ENCODE measurements at regions of chr7 and their contacts with region 1.

Region 1: GRCh38 chr7:44847508-44847920 is 373 bp downstream of the H2AZ2 start:
- DNase-seq: peak; percentile 91
- H3K4me3 Mint-ChIP-seq: peak overlapping the region; percentile 93
- H3K27ac Mint-ChIP-seq: peak overlapping the region; percentile 95
- H3K4me1 Mint-ChIP-seq: peaks cover 37% of the 10 kb centered on the region
- H3K27me3 Mint-ChIP-seq: peaks cover 2% of the 10 kb centered on the region

Region 2: DNA sequence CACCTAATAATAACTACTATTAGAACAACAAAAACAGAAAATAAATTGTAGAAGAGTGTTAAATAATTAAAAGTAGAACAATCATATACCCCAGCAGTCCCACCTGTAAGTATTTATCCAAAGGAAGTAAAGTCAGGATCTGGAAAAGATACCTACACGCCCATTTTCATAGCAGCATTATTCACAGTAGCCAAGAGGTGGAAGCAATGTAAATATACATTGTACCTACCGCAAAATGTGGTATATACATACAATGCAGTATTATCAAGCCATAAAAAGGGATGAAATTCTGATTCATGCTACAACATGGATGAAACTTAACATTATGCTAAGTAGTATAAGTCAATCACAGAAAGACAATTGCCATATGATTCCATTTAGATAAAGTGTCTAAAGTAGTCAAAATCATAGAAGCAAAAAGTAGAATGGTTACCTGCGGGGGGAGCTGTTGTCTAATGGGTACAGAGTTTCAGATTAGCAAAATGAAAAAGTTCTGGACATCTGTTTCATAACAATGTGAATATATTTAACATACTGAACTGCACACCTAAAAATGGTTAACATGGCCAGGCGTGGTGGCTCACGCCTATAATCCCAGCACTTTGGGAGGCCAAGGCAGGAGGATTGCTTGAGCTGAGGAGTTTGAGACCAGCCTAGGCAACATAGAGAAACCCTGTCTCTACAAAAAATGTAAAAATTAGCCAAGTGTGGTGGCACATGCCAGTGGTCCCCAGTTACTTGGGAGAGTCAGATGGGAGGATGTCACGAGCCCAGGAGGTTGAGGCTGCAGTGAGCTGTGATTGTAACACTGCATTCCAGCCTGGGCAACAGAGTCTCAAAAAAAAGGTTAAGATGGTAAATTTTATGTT is 259.4 kb before region 1 on chr7:
- CTCF ChIA-PET with region 1: interaction called, 6 read pairs
- POLR2A ChIA-PET with region 1: interaction called, 27 read pairs
- intact Hi-C with region 1: loop called (anchors 1 kb)
- DNase-seq: peak; percentile 73
- H3K4me3 Mint-ChIP-seq: no peak overlapping the region
- H3K27ac Mint-ChIP-seq: peak overlapping the region; percentile 33
- H3K4me1 Mint-ChIP-seq: peaks cover 8% of the 10 kb centered on the region
- H3K27me3 Mint-ChIP-seq: no peaks in the 10 kb centered on the region

Region 3: GRCh38 chr7:44633254-44634186 is 214.0 kb before region 1 on chr7:
- CTCF ChIA-PET with region 1: interaction called, 4 read pairs
- POLR2A ChIA-PET with region 1: interaction called, 14 read pairs
- intact Hi-C with region 1: loop called (anchors 1 kb)
- DNase-seq: peak; percentile 84
- H3K4me3 Mint-ChIP-seq: peak overlapping the region; percentile 53
- H3K27ac Mint-ChIP-seq: peak overlapping the region; percentile 96
- H3K4me1 Mint-ChIP-seq: peaks cover 97% of the 10 kb centered on the region
- H3K27me3 Mint-ChIP-seq: no peaks in the 10 kb centered on the region

Region 4: DNA sequence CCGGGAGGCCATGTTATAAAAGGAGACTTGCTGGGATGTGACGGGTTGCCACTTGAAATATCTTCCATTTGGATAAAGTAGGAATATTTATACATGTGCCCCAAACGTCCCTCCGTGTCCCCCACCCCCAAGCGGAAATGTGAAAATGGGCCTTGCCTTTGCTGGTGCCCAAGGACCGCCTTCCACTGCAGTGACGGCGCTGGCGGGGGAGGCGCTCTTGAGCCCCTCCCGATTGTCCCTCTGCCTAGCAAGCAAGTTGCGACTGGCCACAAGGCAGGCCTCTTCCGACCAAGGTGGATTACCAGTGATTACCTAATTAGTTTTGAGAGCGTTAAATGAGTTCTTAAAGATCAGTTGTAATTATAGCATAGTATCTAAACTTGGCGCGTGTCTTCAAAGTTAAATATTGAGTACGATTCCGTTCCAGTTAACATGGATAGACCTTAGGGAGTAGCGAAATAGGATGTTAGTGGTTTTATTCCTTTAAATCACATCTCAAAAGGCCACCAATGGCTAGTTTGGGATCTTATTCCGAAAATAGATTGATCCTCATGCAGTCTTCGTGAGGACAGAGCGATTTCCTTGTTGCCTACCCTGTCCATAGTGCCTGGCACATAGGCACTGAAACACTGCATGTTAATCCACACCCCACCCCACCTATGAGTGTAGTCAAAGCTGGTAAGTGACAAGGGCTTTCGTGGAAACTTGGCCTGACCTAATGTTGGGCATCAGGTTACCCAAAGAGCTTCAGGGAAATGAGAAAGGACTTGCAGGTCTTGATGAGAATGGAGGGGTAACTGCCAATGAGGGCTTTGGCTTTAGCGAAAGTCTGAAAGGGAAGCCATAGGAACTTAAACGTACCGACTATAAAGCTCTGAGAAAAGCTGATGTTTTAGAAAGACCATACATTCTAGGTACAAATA is 49.9 kb before region 1 on chr7:
- CTCF ChIA-PET with region 1: interaction called, 10 read pairs
- POLR2A ChIA-PET with region 1: interaction called, 17 read pairs
- intact Hi-C with region 1: loop called (anchors 1 kb)
- DNase-seq: peak; percentile 91
- H3K4me3 Mint-ChIP-seq: peak overlapping the region; percentile 97
- H3K27ac Mint-ChIP-seq: peak overlapping the region; percentile 99
- H3K4me1 Mint-ChIP-seq: peaks cover 31% of the 10 kb centered on the region
- H3K27me3 Mint-ChIP-seq: no peaks in the 10 kb centered on the region

Region 5: DNA sequence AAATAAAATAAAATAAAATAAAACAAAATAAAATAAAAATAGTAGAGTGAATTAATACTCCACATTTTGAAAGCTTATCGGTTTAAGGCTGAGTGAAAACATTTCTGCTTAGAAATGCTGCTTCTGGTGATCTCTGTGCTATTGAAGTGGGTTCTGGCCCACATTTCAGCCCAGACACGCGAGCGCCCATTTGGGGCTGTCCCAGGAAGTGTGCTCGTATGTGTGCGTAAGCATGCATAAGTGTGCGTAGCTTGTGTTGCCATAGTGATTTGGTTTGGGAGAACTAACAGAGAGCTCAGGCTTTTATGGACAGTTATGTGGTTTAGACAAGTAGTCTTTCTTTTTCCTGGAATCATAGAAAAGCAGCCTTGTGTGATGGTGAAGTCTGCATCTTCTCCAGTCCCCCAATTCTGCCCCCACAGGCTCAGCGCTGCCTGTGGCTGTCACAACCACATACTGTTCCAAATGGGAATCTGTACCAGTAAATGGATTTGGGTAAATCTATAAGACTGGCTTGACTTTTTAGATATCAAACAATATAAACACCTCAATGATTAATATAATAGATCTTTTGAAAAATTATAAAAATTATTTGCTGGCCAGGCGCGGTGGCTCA is 67.6 kb after region 1 on chr7:
- CTCF ChIA-PET with region 1: interaction called, 6 read pairs
- POLR2A ChIA-PET with region 1: interaction called, 14 read pairs
- intact Hi-C with region 1: loop called (anchors 1 kb)
- DNase-seq: peak; percentile 88
- H3K4me3 Mint-ChIP-seq: no peak overlapping the region
- H3K27ac Mint-ChIP-seq: peak overlapping the region; percentile 76
- H3K4me1 Mint-ChIP-seq: peaks cover 20% of the 10 kb centered on the region
- H3K27me3 Mint-ChIP-seq: no peaks in the 10 kb centered on the region

Region 6: DNA sequence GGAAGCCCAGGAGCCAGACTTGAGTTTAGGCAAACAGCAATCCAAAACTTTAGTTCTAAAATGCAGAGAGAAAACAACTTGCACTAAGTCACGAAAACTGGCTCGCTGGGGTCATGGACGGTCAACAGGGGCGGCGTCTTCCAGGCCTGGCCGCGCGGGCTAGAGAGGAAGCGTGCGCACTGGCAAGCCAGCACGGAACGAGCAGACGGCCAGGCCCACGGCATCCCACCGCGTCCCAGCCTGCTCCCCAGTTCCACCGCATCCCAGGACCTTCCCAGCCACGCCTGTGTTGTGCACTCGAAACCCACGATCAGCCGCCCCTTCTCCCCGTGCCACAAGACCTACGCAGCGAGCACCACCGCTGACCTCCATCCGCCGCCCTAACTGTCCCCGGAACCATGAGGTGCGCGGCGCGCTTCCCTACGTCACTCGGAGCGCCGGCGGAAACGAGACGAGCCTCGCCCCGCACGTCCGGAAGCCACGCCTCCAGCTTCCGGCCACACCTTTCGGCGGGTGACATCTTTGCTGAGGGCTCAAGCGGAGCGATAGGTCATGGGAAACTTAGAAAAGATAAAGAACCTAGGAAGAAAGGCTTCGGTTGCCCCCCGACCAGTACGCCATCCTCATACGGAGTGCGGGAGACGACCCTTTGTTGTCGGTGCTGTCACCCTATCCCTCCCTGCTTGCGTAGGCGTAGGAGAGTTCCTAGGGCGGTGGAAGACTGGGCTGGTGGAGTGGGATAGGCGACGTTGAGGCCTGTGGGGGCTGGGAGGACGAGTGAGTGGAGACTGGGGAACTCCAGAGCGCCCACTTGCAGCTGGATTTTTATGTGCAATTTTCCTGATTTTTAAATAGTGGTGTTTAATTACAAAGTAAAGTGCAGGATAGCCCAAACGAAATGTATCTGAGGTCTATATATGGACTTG is 264.0 kb after region 1 on chr7 and contains the start of gene TBRG4:
- CTCF ChIA-PET with region 1: no interaction called
- POLR2A ChIA-PET with region 1: interaction called, 3 read pairs
- intact Hi-C with region 1: loop called (anchors 2 kb)
- DNase-seq: peak; percentile 96
- H3K4me3 Mint-ChIP-seq: peak within 1 kb of the TSS; percentile 96
- H3K27ac Mint-ChIP-seq: peak within 1 kb of the TSS; percentile 94
- H3K4me1 Mint-ChIP-seq: peaks cover 40% of the 10 kb centered on the region
- H3K27me3 Mint-ChIP-seq: no peaks in the 10 kb centered on the region
- total RNA-seq, gene TBRG4: 135 to 137 TPM

Measured in activated CD4-positive, alpha-beta memory T cell treated with anti-CD3 and anti-CD28 coated beads for 36 hours (primary cell).